GM12878 (cell line): ENCODE measurements at regions of chrX and their contacts with region 1.

Region 1: DNA sequence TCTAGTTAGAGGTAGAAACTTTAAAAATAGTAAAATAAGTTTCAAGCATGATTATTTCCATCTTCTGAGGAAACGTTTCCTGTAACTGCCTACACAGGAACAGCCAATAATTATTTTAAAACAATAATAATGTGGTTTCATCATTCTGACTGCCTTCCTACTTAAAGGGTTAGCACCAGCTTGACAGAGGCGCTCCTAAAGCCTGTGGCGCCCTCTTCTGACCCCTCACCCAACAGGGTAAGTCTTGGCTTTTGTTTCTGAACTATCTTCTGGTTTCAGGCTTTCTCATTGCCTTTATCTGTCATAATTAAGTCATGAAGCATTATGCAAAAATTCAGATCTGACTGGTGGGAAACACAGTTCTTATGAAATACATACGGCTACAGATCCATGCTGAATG is 96.7 kb downstream of the ITM2A start:
- DNase-seq: peak; percentile 63
- ATAC-seq: peak; percentile 99
- H3K4me3 ChIP-seq: no peak overlapping the region
- H3K27ac ChIP-seq: no peak overlapping the region
- H3K4me1 ChIP-seq: no peaks in the 10 kb centered on the region
- H3K27me3 ChIP-seq: no peaks in the 10 kb centered on the region
- CTCF ChIP-seq: peak; percentile 74 to 91 (median 74); a peak in 5 of 6 replicates
- EP300 ChIP-seq: no peak
- POLR2A ChIP-seq: no peak
- RAD21 ChIP-seq: peak; percentile 97

Region 2: DNA sequence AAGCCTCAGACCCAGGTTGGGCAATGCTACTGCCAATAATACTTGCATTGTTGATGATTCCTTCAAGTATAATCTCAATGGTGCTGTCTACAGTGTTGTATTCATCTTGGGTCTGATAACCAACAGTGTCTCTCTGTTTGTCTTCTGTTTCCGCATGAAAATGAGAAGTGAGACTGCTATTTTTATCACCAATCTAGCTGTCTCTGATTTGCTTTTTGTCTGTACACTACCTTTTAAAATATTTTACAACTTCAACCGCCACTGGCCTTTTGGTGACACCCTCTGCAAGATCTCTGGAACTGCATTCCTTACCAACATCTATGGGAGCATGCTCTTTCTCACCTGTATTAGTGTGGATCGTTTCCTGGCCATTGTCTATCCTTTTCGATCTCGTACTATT is 515.5 kb before region 1 on chrX:
- CTCF ChIA-PET with region 1: no interaction called
- POLR2A ChIA-PET with region 1: no interaction called
- RAD21 ChIA-PET with region 1: interaction called, 3 read pairs
- SMC1A ChIA-PET with region 1: interaction called, 3 read pairs
- in situ Hi-C with region 1: no loop called
- intact Hi-C with region 1: loop called (anchors 5 kb)
- DNase-seq: peak; percentile 49
- ATAC-seq: peak; percentile 94
- H3K4me3 ChIP-seq: no peak overlapping the region
- H3K27ac ChIP-seq: no peak overlapping the region
- H3K4me1 ChIP-seq: peaks cover 20% of the 10 kb centered on the region
- H3K27me3 ChIP-seq: no peaks in the 10 kb centered on the region
- CTCF ChIP-seq: peak; percentile 15 to 44 (median 32); a peak in 4 of 6 replicates
- EP300 ChIP-seq: no peak
- POLR2A ChIP-seq: no peak
- RAD21 ChIP-seq: peak; percentile 79

Region 3: DNA sequence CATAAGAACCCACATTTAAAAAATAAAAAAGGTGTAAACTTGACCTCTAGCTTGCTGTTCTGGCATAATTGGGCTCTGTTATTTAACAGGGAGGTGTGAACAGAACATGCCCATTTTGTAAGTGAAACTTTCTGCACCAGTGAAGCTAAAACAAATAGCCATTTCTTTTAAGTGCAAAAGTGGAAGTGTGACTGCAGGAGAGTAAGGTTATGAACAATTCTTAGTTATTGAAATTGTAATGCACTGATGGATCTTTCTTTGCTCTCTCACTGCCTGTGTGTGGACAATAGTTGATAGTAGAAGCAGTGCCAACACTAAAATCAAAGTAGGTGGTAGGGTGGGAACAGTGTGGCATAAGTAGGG is 312.7 kb before region 1 on chrX:
- CTCF ChIA-PET with region 1: no interaction called
- POLR2A ChIA-PET with region 1: no interaction called
- RAD21 ChIA-PET with region 1: interaction called, 13 read pairs
- SMC1A ChIA-PET with region 1: interaction called, 8 read pairs
- in situ Hi-C with region 1: no loop called
- intact Hi-C with region 1: no loop called
- DNase-seq: peak; percentile 93
- ATAC-seq: peak; percentile 84
- H3K4me3 ChIP-seq: peak overlapping the region; percentile 49; the same call in 1 of the 2 replicates
- H3K27ac ChIP-seq: peak overlapping the region; percentile 86
- H3K4me1 ChIP-seq: peaks cover 28% of the 10 kb centered on the region
- H3K27me3 ChIP-seq: no peaks in the 10 kb centered on the region
- CTCF ChIP-seq: no peak
- EP300 ChIP-seq: peak; percentile 72 to 97; a peak in 3 of 4 replicates
- POLR2A ChIP-seq: no peak
- RAD21 ChIP-seq: no peak

Region 4: GRCh38 chrX:79153348-79153747 is 117.1 kb before region 1 on chrX:
- CTCF ChIA-PET with region 1: interaction called, 6 read pairs
- POLR2A ChIA-PET with region 1: interaction called, 4 read pairs
- RAD21 ChIA-PET with region 1: interaction called, 18 read pairs
- SMC1A ChIA-PET with region 1: interaction called, 8 read pairs
- in situ Hi-C with region 1: no loop called
- intact Hi-C with region 1: no loop called
- DNase-seq: no peak
- ATAC-seq: peak; percentile 48
- H3K4me3 ChIP-seq: no peak overlapping the region
- H3K27ac ChIP-seq: peak overlapping the region; percentile 8; the same call in 1 of the 2 replicates
- H3K4me1 ChIP-seq: peaks cover 2% of the 10 kb centered on the region; the same call in 1 of the 2 replicates
- H3K27me3 ChIP-seq: no peaks in the 10 kb centered on the region
- CTCF ChIP-seq: no peak
- EP300 ChIP-seq: no peak
- POLR2A ChIP-seq: no peak
- RAD21 ChIP-seq: no peak

Region 5: GRCh38 chrX:79182616-79183015 is 87.8 kb before region 1 on chrX:
- CTCF ChIA-PET with region 1: interaction called, 3 read pairs
- POLR2A ChIA-PET with region 1: interaction called, 5 read pairs
- RAD21 ChIA-PET with region 1: interaction called, 16 read pairs
- SMC1A ChIA-PET with region 1: interaction called, 8 read pairs
- in situ Hi-C with region 1: no loop called
- intact Hi-C with region 1: loop called (anchors 1 kb)
- DNase-seq: peak; percentile 84
- ATAC-seq: peak; percentile 93
- H3K4me3 ChIP-seq: no peak overlapping the region
- H3K27ac ChIP-seq: peak overlapping the region; percentile 57
- H3K4me1 ChIP-seq: peaks cover 12% of the 10 kb centered on the region; the same call in 1 of the 2 replicates
- H3K27me3 ChIP-seq: no peaks in the 10 kb centered on the region
- CTCF ChIP-seq: no peak
- EP300 ChIP-seq: peak; percentile 94
- POLR2A ChIP-seq: no peak
- RAD21 ChIP-seq: 0 out of 2 replicates have a peak, but pooled peaks have one; percentile 17